PC-3 (cell line): ENCODE measurements at regions of chr1 and their contacts with region 1.

Region 1: DNA sequence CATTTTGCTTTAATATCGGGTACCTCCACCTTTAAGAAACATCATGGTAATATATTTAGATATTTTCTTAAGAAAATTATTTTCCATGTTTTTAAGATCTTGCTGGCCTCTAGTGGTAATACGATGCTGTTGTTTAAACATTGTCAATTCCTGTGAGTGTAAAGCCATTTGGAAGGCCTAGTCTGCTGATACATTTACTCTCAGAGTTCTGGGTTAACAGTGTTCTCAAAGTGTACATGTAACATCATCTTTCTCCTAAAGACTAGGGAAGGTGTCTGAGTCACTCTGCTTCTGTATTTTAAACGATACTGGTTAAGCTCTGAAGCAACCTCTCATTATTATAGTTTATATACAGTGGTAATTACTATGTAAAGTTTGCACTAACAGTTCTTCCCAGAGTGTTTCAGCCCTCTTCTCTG is 189.1 kb downstream of the RASAL2 start:
- DNase-seq: peak; percentile 62
- ATAC-seq: peak; percentile 85
- H3K4me3 ChIP-seq: no peak overlapping the region
- H3K27ac ChIP-seq: peak overlapping the region; percentile 51
- H3K4me1 ChIP-seq: peaks cover 23% of the 10 kb centered on the region
- H3K27me3 ChIP-seq: no peaks in the 10 kb centered on the region
- CTCF ChIP-seq: peak; percentile 61

Region 2: DNA sequence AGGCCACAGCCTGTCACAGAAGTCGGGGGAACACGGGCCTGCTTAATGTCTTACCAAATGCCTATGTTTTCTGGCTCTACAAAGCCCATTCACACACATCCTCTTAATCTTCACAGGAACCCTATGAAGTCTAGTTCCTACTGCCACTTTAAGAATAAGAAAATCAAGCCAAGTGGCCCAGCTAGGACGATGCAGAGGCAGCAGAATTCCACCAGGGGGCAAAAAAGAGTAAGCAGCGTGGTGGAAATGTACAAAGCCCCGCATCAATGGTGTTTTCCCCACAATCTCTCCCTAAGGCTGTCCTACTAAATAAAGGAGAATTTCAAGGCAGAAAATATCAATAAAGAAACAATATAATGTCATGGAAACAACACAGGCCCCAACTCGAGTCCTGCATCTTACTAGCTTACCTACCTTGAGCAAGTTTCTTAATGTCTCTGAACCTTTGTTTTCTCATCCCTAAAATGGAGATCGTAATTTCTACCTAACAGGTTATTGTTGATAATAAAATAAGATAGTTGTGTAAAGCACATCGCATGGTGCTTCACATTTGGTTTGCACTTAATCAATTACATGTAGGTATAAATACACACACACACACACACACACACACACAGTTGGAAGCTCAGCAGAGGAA is 334.5 kb before region 1 on chr1:
- CTCF ChIA-PET with region 1: no interaction called
- POLR2A ChIA-PET with region 1: no interaction called
- intact Hi-C with region 1: loop called (anchors 1 kb)
- DNase-seq: peak; percentile 70
- ATAC-seq: peak; percentile 76
- H3K4me3 ChIP-seq: peak overlapping the region; percentile 47; the same call in 1 of the 2 replicates
- H3K27ac ChIP-seq: no peak overlapping the region
- H3K4me1 ChIP-seq: no peaks in the 10 kb centered on the region
- H3K27me3 ChIP-seq: no peaks in the 10 kb centered on the region
- CTCF ChIP-seq: peak; percentile 84

Region 3: GRCh38 chr1:178031856-178032320 is 251.1 kb before region 1 on chr1:
- CTCF ChIA-PET with region 1: interaction called, 5 read pairs
- POLR2A ChIA-PET with region 1: no interaction called
- intact Hi-C with region 1: loop called (anchors 5 kb)
- DNase-seq: peak; percentile 87
- ATAC-seq: peak; percentile 89
- H3K4me3 ChIP-seq: no peak overlapping the region
- H3K27ac ChIP-seq: no peak overlapping the region
- H3K4me1 ChIP-seq: peaks cover 12% of the 10 kb centered on the region
- H3K27me3 ChIP-seq: no peaks in the 10 kb centered on the region
- CTCF ChIP-seq: peak; percentile 81

Region 4: DNA sequence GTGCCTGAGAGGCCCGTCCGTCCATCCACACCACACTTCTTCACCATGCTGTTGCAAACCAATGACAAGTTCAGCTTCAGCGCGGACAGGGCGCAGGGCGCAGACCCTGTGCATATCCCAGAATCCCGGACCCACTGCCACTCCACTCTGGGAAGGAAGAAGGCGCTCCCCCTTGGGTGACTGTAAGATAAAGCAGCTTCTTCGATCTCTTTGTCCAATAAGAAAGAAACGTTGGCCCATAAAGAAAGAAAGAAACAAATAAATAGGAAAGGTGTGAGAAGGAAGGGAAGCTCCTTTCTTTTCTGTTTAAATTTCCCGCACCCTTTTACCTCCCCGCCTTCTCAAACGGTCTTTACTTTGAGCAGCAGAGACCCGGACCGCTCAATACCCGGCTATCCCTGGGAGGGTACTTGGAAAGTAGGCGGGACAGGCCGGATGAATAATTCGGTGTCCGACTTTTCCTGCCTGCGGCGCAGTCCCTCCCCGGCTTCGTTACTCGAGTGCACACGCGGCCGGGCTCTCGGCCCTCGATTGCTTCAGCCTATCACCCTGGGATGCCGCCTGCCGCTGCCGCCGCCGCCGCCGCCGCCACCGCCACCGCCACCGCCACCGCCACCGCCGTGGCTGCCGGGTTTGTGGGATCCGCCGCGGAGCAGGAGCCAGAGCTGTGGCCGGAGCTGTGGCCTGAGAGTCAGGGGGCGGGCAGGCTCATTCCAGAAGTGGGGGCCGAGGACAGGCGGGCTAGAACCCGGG is 189.6 kb before region 1 on chr1:
- CTCF ChIA-PET with region 1: interaction called, 3 read pairs
- POLR2A ChIA-PET with region 1: interaction called, 3 read pairs
- intact Hi-C with region 1: loop called (anchors 2 kb)
- DNase-seq: peak; percentile 92
- ATAC-seq: peak; percentile 80
- H3K4me3 ChIP-seq: peak overlapping the region; percentile 83
- H3K27ac ChIP-seq: peak overlapping the region; percentile 54
- H3K4me1 ChIP-seq: peaks cover 41% of the 10 kb centered on the region
- H3K27me3 ChIP-seq: no peaks in the 10 kb centered on the region
- CTCF ChIP-seq: no peak

Region 5: GRCh38 chr1:178109348-178110143 is 173.4 kb before region 1 on chr1:
- CTCF ChIA-PET with region 1: no interaction called
- POLR2A ChIA-PET with region 1: no interaction called
- intact Hi-C with region 1: no loop called
- DNase-seq: peak; percentile 41
- ATAC-seq: peak; percentile 77
- H3K4me3 ChIP-seq: 0 out of 2 replicates have a peak overlapping the region, but pooled peaks have one; percentile 17
- H3K27ac ChIP-seq: peak overlapping the region; percentile 57
- H3K4me1 ChIP-seq: peaks cover 24% of the 10 kb centered on the region
- H3K27me3 ChIP-seq: no peaks in the 10 kb centered on the region
- CTCF ChIP-seq: no peak

Region 6: DNA sequence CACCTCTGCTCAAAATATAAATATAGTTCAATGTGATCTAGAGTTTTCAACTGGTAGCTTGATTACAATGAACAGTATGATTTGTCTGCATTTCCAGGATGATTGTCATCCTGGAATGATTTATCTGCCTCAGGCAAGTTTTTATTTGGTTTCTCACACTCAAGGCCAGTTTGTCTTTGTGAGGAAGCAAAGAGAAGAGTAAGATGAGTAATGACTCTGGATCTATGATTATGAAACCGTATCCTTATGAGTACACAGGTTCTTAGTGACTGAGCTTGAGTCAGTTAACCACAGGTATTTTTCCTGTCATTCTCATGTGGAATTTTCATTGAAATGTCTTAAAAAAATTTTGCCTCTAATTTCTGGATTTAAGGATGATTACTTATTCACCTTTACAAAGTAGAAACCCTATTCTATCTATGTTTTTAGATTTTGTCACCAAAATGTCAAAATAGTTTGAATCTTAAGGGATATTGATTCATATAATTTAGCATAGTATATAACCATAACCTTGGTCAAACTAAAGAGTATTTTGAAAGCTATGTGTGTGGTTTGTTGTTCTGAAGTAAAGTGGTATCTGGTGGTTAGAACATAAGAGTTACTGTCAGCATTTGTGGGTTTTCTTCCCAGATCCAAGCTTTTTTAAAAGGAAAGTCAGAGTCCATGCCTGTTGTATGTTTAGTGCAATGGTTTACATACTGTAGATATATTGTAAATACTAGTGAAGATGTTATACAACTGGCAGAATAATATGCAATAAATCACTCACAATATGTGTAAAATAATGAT is 44.0 kb before region 1 on chr1:
- CTCF ChIA-PET with region 1: interaction called, 5 read pairs
- POLR2A ChIA-PET with region 1: no interaction called
- intact Hi-C with region 1: loop called (anchors 2 kb)
- DNase-seq: peak; percentile 98
- ATAC-seq: peak; percentile 88
- H3K4me3 ChIP-seq: peak overlapping the region; percentile 23
- H3K27ac ChIP-seq: peak overlapping the region; percentile 98
- H3K4me1 ChIP-seq: peaks cover 62% of the 10 kb centered on the region
- H3K27me3 ChIP-seq: no peaks in the 10 kb centered on the region
- CTCF ChIP-seq: no peak